ENCODE measurements at regions of chr7 and their contacts with region 1.

Region 1: DNA sequence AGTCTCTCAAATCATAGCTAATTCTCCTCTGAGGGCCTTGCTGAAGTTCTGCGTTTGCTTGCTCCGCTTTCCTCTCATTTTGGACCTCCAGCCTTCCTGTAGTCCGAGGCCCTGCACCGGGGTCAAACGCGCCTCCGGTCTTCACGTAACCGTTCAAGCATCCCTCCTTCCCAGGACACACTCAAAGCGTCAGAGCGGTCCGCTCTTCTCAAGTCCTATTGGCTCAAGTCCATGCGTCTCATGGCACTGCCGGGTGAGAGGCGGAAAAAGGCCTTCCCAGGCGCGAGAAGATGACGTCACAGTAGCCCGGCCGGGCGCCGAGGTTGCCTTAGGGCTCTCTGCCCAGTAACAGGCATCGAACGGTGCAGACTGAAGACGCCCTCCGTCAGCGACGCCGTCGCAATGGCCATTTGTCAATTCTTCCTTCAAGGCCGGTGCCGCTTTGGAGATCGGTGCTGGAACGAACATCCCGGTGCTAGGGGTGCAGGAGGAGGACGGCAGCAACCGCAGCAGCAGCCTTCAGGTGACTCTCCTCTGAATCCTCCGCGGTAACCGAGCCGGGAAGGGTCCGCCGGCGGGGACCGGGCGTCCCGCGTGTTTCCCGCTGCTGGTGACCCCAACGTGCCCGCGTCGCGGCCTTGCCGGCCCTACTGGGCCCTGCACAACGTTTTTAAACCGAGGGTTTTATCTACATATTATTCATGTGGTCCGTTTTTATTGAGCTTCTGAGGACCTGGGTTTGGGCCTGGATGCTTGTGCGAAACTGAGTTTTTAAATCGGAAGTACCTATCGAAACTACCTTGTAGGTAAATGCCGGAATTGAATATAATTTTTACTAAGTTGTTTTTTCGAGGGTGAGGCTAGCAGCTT is at the start of gene NUP42:
- DNase-seq: peak; percentile 98
- H3K4me3 ChIP-seq: peak within 1 kb of the TSS; percentile 93
- H3K27ac ChIP-seq: peak within 1 kb of the TSS; percentile 95
- H3K4me1 ChIP-seq: peaks cover 8% of the 10 kb centered on the region
- H3K27me3 ChIP-seq: no peaks in the 10 kb centered on the region
- CTCF ChIP-seq: no peak
- total RNA-seq, gene NUP42: 23.4 to 30.5 TPM

Region 2: GRCh38 chr7:23100697-23101096 is 81.2 kb before region 1 on chr7:
- intact Hi-C with region 1: loop called (anchors 5 kb)
- DNase-seq: no peak
- H3K4me3 ChIP-seq: no peak overlapping the region
- H3K27ac ChIP-seq: no peak overlapping the region
- H3K4me1 ChIP-seq: no peaks in the 10 kb centered on the region
- H3K27me3 ChIP-seq: no peaks in the 10 kb centered on the region
- CTCF ChIP-seq: no peak

Measured in colonic mucosa (tissue), 4 donors.